Astrocyte of the cerebellum (primary cell): ENCODE measurements at regions of chr9 and their contacts with region 1.

Region 1: DNA sequence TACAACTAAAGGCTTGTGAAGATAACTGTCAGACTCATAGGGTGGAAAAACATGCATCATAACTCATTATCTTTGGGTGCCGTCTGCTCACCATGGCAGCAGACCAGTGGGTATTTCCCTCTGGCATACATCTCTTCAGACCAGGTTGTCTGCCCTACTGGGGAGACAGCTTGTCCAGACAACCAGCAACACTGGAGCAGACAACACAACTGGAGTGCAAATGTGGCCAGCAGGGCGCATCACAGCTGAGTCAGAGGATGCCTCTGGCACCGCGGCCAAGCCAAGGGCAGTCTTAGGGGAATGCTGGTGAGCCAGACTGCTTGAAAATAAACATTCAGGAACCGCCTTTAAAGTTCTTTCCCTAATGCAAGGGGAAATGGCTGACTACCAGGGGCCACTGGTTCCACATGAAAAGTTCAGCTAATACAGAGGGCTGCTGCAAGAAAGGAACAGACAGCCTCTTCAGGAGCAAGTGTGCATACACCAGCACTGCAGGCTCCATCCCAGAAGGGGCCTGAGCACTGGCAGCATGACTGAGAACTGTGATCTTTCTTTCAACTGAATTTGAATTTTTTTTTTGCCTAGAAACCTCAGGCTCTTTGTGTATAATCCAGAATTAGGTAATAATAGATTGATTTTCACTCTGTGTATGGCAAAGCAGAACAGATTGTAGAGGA is 77.3 kb downstream of the MAMDC2 start:
- DNase-seq: peak; percentile 87
- H3K4me3 ChIP-seq: no peak overlapping the region
- CTCF ChIP-seq: peak; percentile 38

Region 2: GRCh38 chr9:69847491-69847890 is 273.5 kb before region 1 on chr9:
- in situ Hi-C with region 1: no loop called
- DNase-seq: no peak
- H3K4me3 ChIP-seq: no peak overlapping the region
- CTCF ChIP-seq: no peak

Region 3: GRCh38 chr9:70073193-70073592 is 47.8 kb before region 1 on chr9:
- in situ Hi-C with region 1: no loop called
- DNase-seq: no peak
- H3K4me3 ChIP-seq: no peak overlapping the region
- CTCF ChIP-seq: no peak

Region 4: GRCh38 chr9:70170151-70170790 is 49.3 kb after region 1 on chr9:
- in situ Hi-C with region 1: loop called (anchors 5 kb)
- DNase-seq: no peak
- H3K4me3 ChIP-seq: no peak overlapping the region
- CTCF ChIP-seq: no peak